ENCODE measurements at regions of chr16 and their contacts with region 1.

Region 1: DNA sequence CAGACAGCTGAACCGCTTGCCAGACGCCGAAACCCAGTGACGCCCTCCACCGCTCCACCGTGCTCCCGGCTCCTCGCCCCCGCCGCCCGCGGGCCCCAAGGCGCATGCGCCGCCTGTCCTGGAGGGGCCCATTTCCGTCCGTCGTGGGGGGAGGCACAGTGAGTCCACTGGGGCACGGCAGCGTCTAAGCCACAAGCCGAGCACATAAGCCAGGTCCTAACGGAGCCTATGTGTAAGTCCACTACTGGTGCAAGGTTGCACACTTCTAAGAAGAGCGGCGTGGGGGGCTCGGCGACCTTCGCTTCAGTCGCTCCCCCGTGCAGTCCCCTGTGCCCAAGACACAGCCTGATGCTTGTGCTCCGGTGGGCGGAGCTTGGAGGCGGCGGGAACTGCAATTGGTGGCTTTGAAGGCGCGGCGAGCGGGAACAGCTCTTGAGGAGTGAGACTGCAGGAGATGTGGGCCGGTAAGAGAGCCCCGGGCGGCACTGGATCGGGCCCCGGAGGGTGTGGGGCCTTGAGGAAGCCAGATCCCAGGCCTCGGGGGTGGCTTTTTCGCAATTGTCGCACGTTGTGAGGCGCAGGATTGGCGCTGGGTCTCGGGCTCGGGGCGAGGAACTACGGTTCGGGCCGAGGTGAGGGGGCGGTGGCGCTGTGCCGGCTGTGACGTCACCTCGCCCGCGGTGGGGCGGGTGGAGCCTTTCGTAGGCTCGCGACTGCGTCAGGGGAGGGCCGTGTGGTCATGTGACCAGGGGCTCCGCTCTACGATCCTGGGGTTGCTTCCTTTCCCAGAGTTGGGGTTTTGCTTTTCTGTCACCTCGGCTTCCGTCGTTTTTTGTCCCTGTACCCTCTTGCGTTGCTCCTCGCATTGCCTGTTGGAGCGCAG is at the starts of genes CENPN and CMC2:
- DNase-seq: peak; percentile 98
- H3K4me3 Mint-ChIP-seq: peak within 1 kb of the TSS; percentile 95
- H3K27ac Mint-ChIP-seq: peak within 1 kb of the TSS; percentile 100
- H3K4me1 Mint-ChIP-seq: peaks cover 50% of the 10 kb centered on the region
- H3K27me3 Mint-ChIP-seq: no peaks in the 10 kb centered on the region
- total RNA-seq, gene CENPN: 65.1 to 75.0 TPM
- total RNA-seq, gene CMC2: 112 to 122 TPM

Region 2: GRCh38 chr16:79261481-79261940 is 1745.5 kb before region 1 on chr16:
- CTCF ChIA-PET with region 1: no interaction called
- intact Hi-C with region 1: loop called (anchors 10 kb)
- DNase-seq: peak; percentile 61
- H3K4me3 Mint-ChIP-seq: no peak overlapping the region
- H3K27ac Mint-ChIP-seq: no peak overlapping the region
- H3K4me1 Mint-ChIP-seq: peaks cover 24% of the 10 kb centered on the region
- H3K27me3 Mint-ChIP-seq: peaks cover 28% of the 10 kb centered on the region

Region 3: GRCh38 chr16:80656711-80657150 is 350.3 kb before region 1 on chr16:
- CTCF ChIA-PET with region 1: no interaction called
- intact Hi-C with region 1: loop called (anchors 10 kb)
- DNase-seq: peak; percentile 49
- H3K4me3 Mint-ChIP-seq: peak overlapping the region; percentile 73
- H3K27ac Mint-ChIP-seq: peak overlapping the region; percentile 68
- H3K4me1 Mint-ChIP-seq: peaks cover 20% of the 10 kb centered on the region
- H3K27me3 Mint-ChIP-seq: no peaks in the 10 kb centered on the region

Region 4: DNA sequence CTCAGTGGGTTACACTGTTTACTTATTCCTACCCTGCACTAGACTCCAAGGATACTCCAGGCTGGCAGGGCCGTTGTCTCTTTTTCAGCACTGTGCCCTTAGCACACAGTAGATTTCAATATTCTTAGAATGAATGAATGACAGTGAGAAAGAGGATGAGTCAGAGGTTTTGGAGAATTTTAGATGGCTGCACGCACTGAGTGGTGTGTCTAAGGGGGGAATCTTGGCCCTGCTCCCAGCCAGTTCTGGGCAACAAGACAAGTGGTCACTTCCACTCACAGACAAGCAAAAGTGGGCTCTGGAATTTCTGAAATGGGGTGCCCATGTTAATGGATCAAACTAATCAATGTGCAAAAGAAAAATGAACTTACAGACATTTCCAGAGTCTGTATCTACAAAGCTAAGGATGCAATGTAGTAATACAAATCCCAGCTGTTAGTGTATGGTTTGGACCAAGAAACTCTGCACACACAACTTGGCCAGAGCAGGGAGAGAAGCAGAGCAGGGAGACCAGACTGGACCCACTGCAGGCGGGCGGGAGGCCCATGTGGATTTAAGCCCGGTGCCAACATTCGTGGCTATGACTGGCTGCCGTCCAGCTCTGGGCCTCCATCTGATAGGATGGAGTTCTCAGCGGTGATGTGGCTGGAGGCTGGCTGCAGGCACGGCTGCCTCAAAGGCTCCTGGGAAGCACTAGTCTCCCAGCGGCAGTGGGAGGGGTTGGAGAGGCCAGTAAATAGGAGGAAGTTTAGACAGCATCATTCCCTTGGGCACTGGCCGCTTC is 107.1 kb before region 1 on chr16:
- CTCF ChIA-PET with region 1: no interaction called
- intact Hi-C with region 1: no loop called
- DNase-seq: no peak
- H3K4me3 Mint-ChIP-seq: no peak overlapping the region
- H3K27ac Mint-ChIP-seq: no peak overlapping the region
- H3K4me1 Mint-ChIP-seq: no peaks in the 10 kb centered on the region
- H3K27me3 Mint-ChIP-seq: no peaks in the 10 kb centered on the region

Region 5: GRCh38 chr16:81077076-81077940 is 70.3 kb after region 1 on chr16 and contains the start of gene C16orf46:
- CTCF ChIA-PET with region 1: no interaction called
- intact Hi-C with region 1: loop called (anchors 1 kb)
- DNase-seq: peak; percentile 99
- H3K4me3 Mint-ChIP-seq: no peak within 1 kb of the TSS
- H3K27ac Mint-ChIP-seq: no peak within 1 kb of the TSS
- H3K4me1 Mint-ChIP-seq: peaks cover 4% of the 10 kb centered on the region
- H3K27me3 Mint-ChIP-seq: no peaks in the 10 kb centered on the region
- total RNA-seq, gene C16orf46: 0.74 TPM in 1 of 2 experiments, not detected in the other

Region 6: DNA sequence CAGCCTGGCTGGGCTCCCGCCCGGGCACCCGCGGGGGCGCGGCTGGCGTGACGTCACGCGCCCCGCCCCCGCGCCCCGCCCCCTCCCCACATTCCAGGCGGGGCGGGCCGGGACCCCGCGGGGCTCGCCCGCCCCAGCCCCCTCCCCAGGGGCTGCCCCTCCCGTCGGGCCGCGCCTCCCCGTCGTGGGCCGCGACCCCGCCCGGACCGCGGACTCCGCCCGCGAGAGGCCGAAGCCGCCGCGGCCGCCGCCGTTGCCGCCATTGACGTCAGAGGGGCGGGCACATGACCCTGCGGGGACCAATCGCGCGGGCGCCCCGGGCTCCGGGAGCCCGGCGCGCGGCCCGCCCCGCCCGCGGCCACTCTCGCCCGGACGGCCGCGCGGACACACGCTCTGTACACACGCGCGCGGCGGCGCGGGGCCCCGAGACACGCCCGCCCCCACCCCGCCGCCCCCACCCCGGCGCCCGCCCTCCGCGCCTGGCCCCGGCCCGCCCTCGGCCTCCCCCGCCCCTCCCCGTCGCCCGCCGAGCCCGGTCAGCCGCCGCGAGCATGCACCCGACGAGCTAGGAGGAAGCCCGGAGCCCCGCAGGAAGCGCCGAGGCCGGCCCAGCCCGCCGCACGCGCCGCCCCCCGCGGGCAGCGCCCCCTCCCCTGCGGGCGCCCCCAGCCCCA is 437.5 kb after region 1 on chr16 and contains the start of gene CMIP:
- CTCF ChIA-PET with region 1: no interaction called
- intact Hi-C with region 1: loop called (anchors 10 kb)
- DNase-seq: peak; percentile 81
- H3K4me3 Mint-ChIP-seq: peak within 1 kb of the TSS; percentile 75
- H3K27ac Mint-ChIP-seq: peak within 1 kb of the TSS; percentile 57
- H3K4me1 Mint-ChIP-seq: peaks cover 33% of the 10 kb centered on the region
- H3K27me3 Mint-ChIP-seq: no peaks in the 10 kb centered on the region
- total RNA-seq, gene CMIP: 28.6 to 28.8 TPM

Measured in activated naive CD4-positive, alpha-beta T cell treated with anti-CD3 and anti-CD28 coated beads for 36 hours (primary cell).